Dendritic cell treated with granulocyte-macrophage colony-stimulating factor and Interleukin-4, amounts not matched to agents 40 ng/mL and 50 ng/mL, for 4 days (primary cell): ENCODE measurements at regions of chr18 and their contacts with region 1.

Region 1: GRCh38 chr18:58321986-58322385 is 278.0 kb downstream of the NEDD4L start:
- H3K4me3 Mint-ChIP-seq: no peak overlapping the region
- H3K27ac Mint-ChIP-seq: peak overlapping the region; percentile 69
- H3K4me1 Mint-ChIP-seq: peaks cover 32% of the 10 kb centered on the region
- H3K27me3 Mint-ChIP-seq: no peaks in the 10 kb centered on the region

Region 2: GRCh38 chr18:58135701-58136331 is 186.2 kb before region 1 on chr18:
- intact Hi-C with region 1: loop called (anchors 5 kb)
- H3K4me3 Mint-ChIP-seq: no peak overlapping the region
- H3K27ac Mint-ChIP-seq: no peak overlapping the region
- H3K4me1 Mint-ChIP-seq: peaks cover 4% of the 10 kb centered on the region
- H3K27me3 Mint-ChIP-seq: peaks cover 3% of the 10 kb centered on the region

Region 3: DNA sequence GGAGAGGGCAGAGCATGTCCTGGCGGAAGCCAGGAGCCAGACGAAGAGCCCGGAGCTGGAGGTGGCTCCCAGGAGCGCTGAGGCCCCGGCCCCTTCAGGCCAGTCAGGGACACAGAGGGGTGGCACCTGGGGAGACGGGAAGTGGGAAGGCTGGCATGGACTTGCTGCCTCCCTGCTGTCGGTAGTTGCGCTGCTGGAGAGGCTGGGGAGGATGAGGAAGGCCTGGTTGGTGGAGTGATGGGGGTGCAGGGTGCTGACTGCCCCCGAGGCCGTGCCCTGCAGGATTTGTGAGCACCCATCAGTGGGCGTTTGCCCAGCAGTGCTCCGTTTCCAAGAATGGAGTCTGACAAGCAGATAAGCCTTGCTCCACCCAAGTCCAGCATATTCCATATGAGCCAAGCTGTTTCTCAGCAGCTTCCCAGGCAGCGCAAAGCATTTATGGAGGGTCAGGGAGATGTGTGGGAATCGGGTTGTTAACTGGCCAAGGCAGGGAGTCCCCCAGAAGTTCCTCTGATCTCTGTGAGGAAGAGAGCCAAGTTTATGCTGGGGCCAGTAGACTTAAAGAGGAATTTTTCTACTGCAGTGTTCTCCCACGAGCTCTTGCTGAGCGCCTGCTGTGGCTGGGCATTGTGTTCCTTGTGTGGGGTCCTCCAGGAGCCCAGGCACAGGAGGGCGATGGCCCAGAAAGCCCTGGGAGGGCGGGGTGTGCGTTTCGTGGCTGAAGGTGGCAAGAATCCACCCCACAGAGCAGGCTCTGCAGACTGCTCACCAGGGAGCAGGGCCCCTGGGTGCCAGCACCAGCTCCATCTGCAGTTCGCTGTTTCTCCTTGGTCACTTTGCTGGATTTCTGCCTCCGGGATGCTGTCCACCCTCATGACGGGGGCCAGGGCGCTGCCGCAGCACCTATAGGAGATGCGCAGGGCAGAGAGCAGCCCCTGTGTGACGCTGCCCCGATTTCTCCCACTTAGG is 56.7 kb after region 1 on chr18:
- intact Hi-C with region 1: no loop called
- H3K4me3 Mint-ChIP-seq: no peak overlapping the region
- H3K27ac Mint-ChIP-seq: no peak overlapping the region
- H3K4me1 Mint-ChIP-seq: no peaks in the 10 kb centered on the region
- H3K27me3 Mint-ChIP-seq: no peaks in the 10 kb centered on the region

Region 4: GRCh38 chr18:58407649-58408407 is 85.8 kb after region 1 on chr18:
- intact Hi-C with region 1: no loop called
- H3K4me3 Mint-ChIP-seq: no peak overlapping the region
- H3K27ac Mint-ChIP-seq: no peak overlapping the region
- H3K4me1 Mint-ChIP-seq: no peaks in the 10 kb centered on the region
- H3K27me3 Mint-ChIP-seq: no peaks in the 10 kb centered on the region